Sciatic nerve (tissue), 2 donors: ENCODE measurements at regions of chr10 and their contacts with region 1.

Region 1: GRCh38 chr10:100878291-100878910 is 34.4 kb upstream of the SLF2 start:
- DNase-seq: no peak
- ATAC-seq: peak; percentile 84

Region 2: GRCh38 chr10:100562008-100562711 is 316.2 kb before region 1 on chr10:
- intact Hi-C with region 1: loop called (anchors 10 kb)
- DNase-seq: peak; percentile 66
- ATAC-seq: peak; percentile 79

Region 3: GRCh38 chr10:100739516-100740368 is 138.7 kb before region 1 on chr10:
- intact Hi-C with region 1: no loop called
- DNase-seq: no peak
- ATAC-seq: no peak